ENCODE measurements at regions of chr13 and their contacts with region 1.

Region 1: DNA sequence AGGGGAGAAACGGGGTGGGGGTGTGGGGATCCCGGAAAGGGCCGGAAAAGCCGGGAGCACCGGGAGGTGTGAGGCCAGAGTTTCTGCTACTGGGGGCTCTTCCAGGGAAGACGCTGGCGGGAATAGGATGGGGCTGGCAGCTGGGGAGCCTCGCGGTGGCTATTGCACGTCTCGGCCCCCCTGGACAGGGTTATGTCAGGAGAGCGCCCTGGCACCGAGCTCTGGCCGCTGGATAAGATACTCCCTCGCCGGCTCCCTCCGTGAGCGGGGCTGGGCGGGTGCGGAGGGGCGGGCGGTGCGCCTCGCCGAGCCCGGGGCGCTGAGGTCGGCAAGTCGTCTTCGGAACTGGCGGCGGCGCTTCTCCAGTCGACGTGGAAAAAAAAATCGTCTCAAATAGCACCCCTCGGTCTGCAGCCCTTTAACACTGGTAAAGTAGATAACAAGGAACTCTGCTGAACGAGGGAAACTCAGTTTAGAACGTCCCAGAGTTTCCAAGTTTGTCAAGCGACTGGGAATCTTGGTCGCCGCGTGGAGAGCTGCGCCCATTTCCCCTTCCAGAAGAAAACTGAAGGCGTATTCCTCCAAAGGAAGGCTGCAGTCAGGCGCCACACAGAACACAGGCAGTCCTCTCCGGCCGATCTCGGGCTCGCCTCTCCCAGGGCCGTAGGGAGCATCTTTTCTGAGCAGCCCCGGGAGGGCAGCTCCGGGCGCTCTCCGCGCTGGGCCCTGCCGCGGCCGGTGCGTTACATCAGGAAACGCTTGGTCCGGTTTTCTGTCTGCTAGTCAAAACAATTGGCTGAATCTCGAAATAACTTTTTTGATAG is 115.1 kb downstream of the KCNRG start:
- DNase-seq: peak; percentile 71
- ATAC-seq: no peak
- H3K4me3 ChIP-seq: peak overlapping the region; percentile 43 to 87 (median 61)
- H3K4me3 Mint-ChIP-seq: peak overlapping the region; percentile 92
- H3K27ac ChIP-seq: no peak overlapping the region
- H3K27ac Mint-ChIP-seq: peak overlapping the region; percentile 86
- H3K4me1 ChIP-seq: peaks cover 72 to 73% of the 10 kb centered on the region in 2 donors
- H3K4me1 Mint-ChIP-seq: peaks cover 63% of the 10 kb centered on the region
- H3K27me3 ChIP-seq: peaks cover 2 to 68% (median 47%) of the 10 kb centered on the region in 4 experiments
- H3K27me3 Mint-ChIP-seq: peaks cover 35% of the 10 kb centered on the region
- CTCF ChIP-seq: no peak

Region 2: DNA sequence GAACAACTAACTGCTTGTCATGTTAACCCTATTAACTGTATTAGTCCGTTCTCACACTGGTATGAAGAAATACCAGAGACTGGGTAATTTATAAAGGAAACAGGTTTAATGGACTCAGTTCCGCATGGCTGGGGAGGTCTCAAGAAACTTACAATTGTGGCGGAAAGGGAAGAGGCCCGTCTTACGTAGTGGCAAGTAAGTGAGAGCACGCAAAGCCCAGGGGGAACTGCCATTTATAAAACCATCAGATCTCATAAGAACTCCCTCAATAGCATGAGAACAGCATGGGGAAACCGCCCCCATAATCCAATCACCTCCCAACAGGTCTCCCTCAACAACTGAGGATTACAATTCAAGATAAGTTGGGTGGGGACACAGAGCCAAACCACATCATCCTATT is 599.9 kb before region 1 on chr13:
- CTCF ChIA-PET with region 1: no interaction called
- POLR2A ChIA-PET with region 1: no interaction called
- intact Hi-C with region 1: no loop called
- DNase-seq: peak; percentile 77
- ATAC-seq: peak; percentile 84
- H3K4me3 ChIP-seq: peak overlapping the region in 1 of 5 experiments; percentile 5
- H3K4me3 Mint-ChIP-seq: peak overlapping the region; percentile 59
- H3K27ac ChIP-seq: peak overlapping the region; percentile 66 to 82
- H3K27ac Mint-ChIP-seq: peak overlapping the region; percentile 92
- H3K4me1 ChIP-seq: peaks cover 44 to 50% of the 10 kb centered on the region in 2 donors
- H3K4me1 Mint-ChIP-seq: peaks cover 66% of the 10 kb centered on the region
- H3K27me3 ChIP-seq: no peaks in the 10 kb centered on the region
- H3K27me3 Mint-ChIP-seq: no peaks in the 10 kb centered on the region
- CTCF ChIP-seq: no peak

Region 3: DNA sequence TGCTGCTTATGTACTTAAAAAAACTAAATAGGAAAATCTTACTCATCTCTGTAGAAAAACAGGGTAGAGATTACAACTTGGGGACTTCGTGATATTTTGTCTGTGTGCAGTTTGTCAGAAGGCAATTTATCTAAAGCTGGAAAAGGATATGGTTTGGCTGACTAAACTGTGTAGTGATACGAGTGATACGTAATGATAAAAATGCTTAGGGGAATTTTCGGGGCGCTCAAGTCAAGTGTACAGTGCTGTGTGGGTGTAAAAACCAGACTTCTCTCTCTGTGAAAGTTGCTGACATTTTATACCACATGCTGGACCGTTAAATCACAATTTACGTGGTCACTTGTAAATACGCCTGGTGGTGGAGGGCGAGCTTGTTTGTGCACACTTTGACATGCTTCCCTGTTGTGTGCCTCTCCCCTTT is 106.6 kb after region 1 on chr13:
- CTCF ChIA-PET with region 1: interaction called, 3 read pairs
- POLR2A ChIA-PET with region 1: interaction called, 4 read pairs
- intact Hi-C with region 1: loop called (anchors 5 kb)
- DNase-seq: peak; percentile 61
- ATAC-seq: peak; percentile 79
- H3K4me3 ChIP-seq: peak overlapping the region in 3 of 5 experiments; percentile 13 to 59 (median 35)
- H3K4me3 Mint-ChIP-seq: peak overlapping the region; percentile 88
- H3K27ac ChIP-seq: peak overlapping the region in 1 of 2 donors; percentile 13
- H3K27ac Mint-ChIP-seq: peak overlapping the region; percentile 83
- H3K4me1 ChIP-seq: peaks cover 3 to 8% of the 10 kb centered on the region in 2 donors
- H3K4me1 Mint-ChIP-seq: peaks cover 27% of the 10 kb centered on the region
- H3K27me3 ChIP-seq: no peaks in the 10 kb centered on the region
- H3K27me3 Mint-ChIP-seq: no peaks in the 10 kb centered on the region
- CTCF ChIP-seq: no peak

Measured in B cell (primary cell).